ENCODE measurements at regions of chr12 and their contacts with region 1.

Region 1: DNA sequence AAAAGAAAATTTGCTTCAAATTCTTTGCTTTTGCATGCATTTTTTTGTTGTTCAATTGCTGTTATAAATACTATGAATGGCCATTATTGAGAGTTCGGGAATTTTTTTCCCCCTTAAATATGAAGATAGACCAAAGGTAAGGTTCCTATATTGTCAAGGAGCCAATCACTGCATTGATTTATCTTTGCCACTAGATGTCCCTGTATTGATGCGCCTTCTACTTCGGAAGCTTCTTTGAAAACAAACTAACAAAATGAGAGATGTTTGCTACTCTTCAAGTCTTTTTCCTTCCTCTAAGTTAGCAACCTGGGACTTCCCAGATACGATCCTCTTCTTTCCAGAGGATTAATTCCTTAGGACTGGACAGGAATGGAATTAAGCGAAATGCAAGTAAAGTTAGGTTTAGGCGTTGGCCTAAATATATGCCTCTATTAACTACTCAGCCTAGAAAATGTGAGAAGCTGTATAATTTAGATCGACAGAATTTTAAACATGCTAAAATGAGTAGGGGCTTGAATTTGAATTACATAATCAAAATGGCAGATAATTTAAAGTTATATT is 318.1 kb downstream of the AEBP2 start:
- DNase-seq: no peak
- H3K4me3 ChIP-seq: no peak overlapping the region
- CTCF ChIP-seq: peak; percentile 56

Region 2: GRCh38 chr12:19746471-19746870 is 10.9 kb before region 1 on chr12:
- CTCF ChIA-PET with region 1: interaction called, 42 read pairs
- POLR2A ChIA-PET with region 1: no interaction called
- DNase-seq: no peak
- H3K4me3 ChIP-seq: no peak overlapping the region
- CTCF ChIP-seq: no peak

Region 3: GRCh38 chr12:19771858-19772257 is 14.5 kb after region 1 on chr12:
- CTCF ChIA-PET with region 1: interaction called, 14 read pairs
- POLR2A ChIA-PET with region 1: no interaction called
- DNase-seq: peak; percentile 90
- H3K4me3 ChIP-seq: no peak overlapping the region
- CTCF ChIP-seq: no peak

Region 4: DNA sequence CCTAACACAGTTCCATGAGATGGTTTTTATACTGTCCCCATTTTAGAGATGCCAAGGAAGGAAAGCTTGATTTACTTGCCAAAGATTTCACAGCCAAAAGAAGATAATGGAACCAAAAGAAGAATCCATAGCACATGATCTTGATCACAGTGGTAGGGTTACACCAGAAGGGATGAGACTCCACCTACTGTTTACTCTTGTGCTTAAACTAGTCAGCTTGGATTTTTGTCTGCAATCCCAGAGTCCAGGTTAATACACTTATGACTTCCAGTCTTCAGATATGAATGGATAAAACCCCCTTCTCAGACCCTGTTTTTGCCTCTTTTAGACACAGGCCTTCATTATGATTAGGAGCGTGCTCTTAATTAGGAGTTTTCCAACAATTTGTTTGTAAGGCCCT is 136.1 kb after region 1 on chr12:
- CTCF ChIA-PET with region 1: interaction called, 26 read pairs
- POLR2A ChIA-PET with region 1: no interaction called
- DNase-seq: no peak
- H3K4me3 ChIP-seq: no peak overlapping the region
- CTCF ChIP-seq: peak; percentile 33

Measured in AG04449 (cell line).